Heart left ventricle (tissue), 16 donors: ENCODE measurements at regions of chr10 and their contacts with region 1.

Region 1: GRCh38 chr10:88800152-88801125 is 2.1 kb upstream of the LIPM start:
- DNase-seq: no peak
- ATAC-seq: no peak
- H3K4me3 ChIP-seq: no peak overlapping the region
- H3K27ac ChIP-seq: no peak overlapping the region
- H3K4me1 ChIP-seq: no peaks in the 10 kb centered on the region
- H3K27me3 ChIP-seq: peaks cover 0 to 4% (median 0%) of the 10 kb centered on the region in 9 donors
- CTCF ChIP-seq: no peak
- POLR2A ChIP-seq: no peak

Region 2: DNA sequence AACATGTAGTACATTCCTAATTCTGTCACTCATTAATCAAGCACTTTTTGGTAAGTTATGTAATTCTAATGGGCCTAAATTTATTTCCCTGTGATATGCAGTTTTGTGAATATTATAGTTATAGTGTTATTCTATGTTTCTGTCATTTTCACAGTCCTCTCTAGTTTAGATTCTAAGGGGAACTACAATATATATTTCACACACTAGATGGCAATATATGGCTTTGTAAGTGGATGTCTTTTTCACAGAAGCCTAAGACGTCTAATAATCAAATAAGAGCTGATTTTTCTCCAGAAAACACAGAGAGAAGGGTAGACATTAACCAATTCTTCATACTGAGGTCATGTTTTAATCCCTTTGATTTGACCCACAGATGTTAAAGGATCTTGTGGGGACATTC is 235.4 kb before region 1 on chr10:
- intact Hi-C with region 1: loop called in 4 of 10 experiments (anchors 5 to 10 kb)
- DNase-seq: no peak
- ATAC-seq: peak in 1 of 4 donors; percentile 33
- H3K4me3 ChIP-seq: no peak overlapping the region
- H3K27ac ChIP-seq: no peak overlapping the region
- H3K4me1 ChIP-seq: no peaks in the 10 kb centered on the region
- H3K27me3 ChIP-seq: no peaks in the 10 kb centered on the region
- CTCF ChIP-seq: peak in 11 of 12 donors; percentile 6 to 53 (median 35)
- POLR2A ChIP-seq: no peak

Region 3: GRCh38 chr10:88687853-88688467 is 112.5 kb before region 1 on chr10:
- intact Hi-C with region 1: loop called in 3 of 10 experiments (anchors 5 to 10 kb)
- DNase-seq: no peak
- ATAC-seq: no peak
- H3K4me3 ChIP-seq: no peak overlapping the region
- H3K27ac ChIP-seq: no peak overlapping the region
- H3K4me1 ChIP-seq: no peaks in the 10 kb centered on the region
- H3K27me3 ChIP-seq: peaks cover 0 to 5% (median 0%) of the 10 kb centered on the region in 9 donors
- CTCF ChIP-seq: peak; percentile 49 to 78 (median 62)
- POLR2A ChIP-seq: no peak

Region 4: GRCh38 chr10:88693392-88694020 is 106.9 kb before region 1 on chr10:
- intact Hi-C with region 1: loop called in 3 of 10 experiments (anchors 5 to 10 kb)
- DNase-seq: no peak
- ATAC-seq: no peak
- H3K4me3 ChIP-seq: no peak overlapping the region
- H3K27ac ChIP-seq: no peak overlapping the region
- H3K4me1 ChIP-seq: no peaks in the 10 kb centered on the region
- H3K27me3 ChIP-seq: peaks cover 0 to 3% (median 0%) of the 10 kb centered on the region in 9 donors
- CTCF ChIP-seq: peak in 3 of 12 donors; percentile 9 to 19 (median 18)
- POLR2A ChIP-seq: no peak